B cell (primary cell): ENCODE measurements at regions of chr5 and their contacts with region 1.

Region 1: DNA sequence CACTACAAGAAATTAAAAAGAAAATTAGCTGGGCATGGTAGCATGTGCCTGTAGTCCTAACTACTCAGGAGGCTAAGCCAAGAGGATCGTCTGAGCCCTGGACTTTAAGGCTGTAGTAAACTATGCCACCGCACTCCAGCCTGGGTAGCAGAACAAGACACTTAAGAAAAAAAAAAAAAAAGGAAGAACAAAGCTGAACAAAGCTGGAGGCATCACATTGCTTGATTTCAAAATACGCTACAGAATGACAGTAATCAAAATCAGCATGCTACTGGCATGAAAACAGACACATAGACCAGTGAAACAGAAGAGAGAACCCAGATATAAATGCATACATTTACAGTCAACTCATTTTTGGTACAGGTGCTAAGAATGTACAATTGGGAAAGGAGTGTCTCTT is 14.5 kb upstream of the OTULIN start:
- DNase-seq: no peak
- ATAC-seq: no peak
- H3K4me3 ChIP-seq: no peak overlapping the region
- H3K4me3 Mint-ChIP-seq: no peak overlapping the region
- H3K27ac ChIP-seq: no peak overlapping the region
- H3K27ac Mint-ChIP-seq: no peak overlapping the region
- H3K4me1 ChIP-seq: peaks cover under 1 to 1% of the 10 kb centered on the region in 2 donors
- H3K4me1 Mint-ChIP-seq: peaks cover under 1% of the 10 kb centered on the region
- H3K27me3 ChIP-seq: no peaks in the 10 kb centered on the region
- H3K27me3 Mint-ChIP-seq: peaks cover 20% of the 10 kb centered on the region
- CTCF ChIP-seq: no peak

Region 2: DNA sequence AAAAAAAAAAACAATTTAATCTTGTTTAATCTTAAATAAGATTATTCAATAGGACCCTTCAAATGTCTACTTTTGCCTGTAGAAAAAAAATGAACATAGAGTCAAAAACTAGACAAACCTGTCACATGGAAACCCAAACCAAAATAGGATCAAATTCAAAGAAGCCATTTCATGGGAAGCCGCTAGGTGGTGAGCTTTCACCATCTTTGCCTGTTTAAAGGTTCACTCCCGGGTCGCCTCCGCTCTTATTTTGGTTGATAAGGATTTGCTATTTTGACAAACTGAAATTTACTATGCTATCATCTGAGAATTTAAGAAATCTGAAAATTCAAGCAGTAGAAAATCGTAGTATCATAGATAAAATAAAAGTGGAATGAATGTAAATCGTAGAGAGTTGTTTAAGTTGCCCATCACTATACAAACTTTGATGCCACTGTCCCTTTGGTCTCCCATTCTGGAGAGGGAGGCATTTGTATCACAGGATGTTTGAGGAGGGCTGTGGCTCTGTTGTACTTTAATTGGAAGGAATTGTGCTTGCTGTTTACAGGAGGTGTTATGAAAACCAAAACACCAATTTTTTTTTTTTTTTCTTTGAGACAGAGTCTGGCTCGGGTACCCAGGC is 662.1 kb before region 1 on chr5:
- CTCF ChIA-PET with region 1: interaction called, 40 read pairs
- POLR2A ChIA-PET with region 1: no interaction called
- intact Hi-C with region 1: loop called (anchors 1 kb)
- DNase-seq: peak; percentile 65
- ATAC-seq: no peak
- H3K4me3 ChIP-seq: no peak overlapping the region
- H3K4me3 Mint-ChIP-seq: no peak overlapping the region
- H3K27ac ChIP-seq: no peak overlapping the region
- H3K27ac Mint-ChIP-seq: no peak overlapping the region
- H3K4me1 ChIP-seq: no peaks in the 10 kb centered on the region
- H3K4me1 Mint-ChIP-seq: peaks cover 2% of the 10 kb centered on the region
- H3K27me3 ChIP-seq: no peaks in the 10 kb centered on the region
- H3K27me3 Mint-ChIP-seq: peaks cover 17% of the 10 kb centered on the region
- CTCF ChIP-seq: peak; percentile 83

Region 3: GRCh38 chr5:14399054-14399692 is 250.9 kb before region 1 on chr5:
- CTCF ChIA-PET with region 1: interaction called, 51 read pairs
- POLR2A ChIA-PET with region 1: no interaction called
- intact Hi-C with region 1: no loop called
- DNase-seq: peak; percentile 39
- ATAC-seq: no peak
- H3K4me3 ChIP-seq: no peak overlapping the region
- H3K4me3 Mint-ChIP-seq: no peak overlapping the region
- H3K27ac ChIP-seq: no peak overlapping the region
- H3K27ac Mint-ChIP-seq: no peak overlapping the region
- H3K4me1 ChIP-seq: no peaks in the 10 kb centered on the region
- H3K4me1 Mint-ChIP-seq: no peaks in the 10 kb centered on the region
- H3K27me3 ChIP-seq: no peaks in the 10 kb centered on the region
- H3K27me3 Mint-ChIP-seq: no peaks in the 10 kb centered on the region
- CTCF ChIP-seq: peak; percentile 70

Region 4: GRCh38 chr5:14685757-14686156 is 35.7 kb after region 1 on chr5:
- CTCF ChIA-PET with region 1: interaction called, 10 read pairs
- POLR2A ChIA-PET with region 1: no interaction called
- intact Hi-C with region 1: no loop called
- DNase-seq: peak; percentile 70
- ATAC-seq: peak; percentile 79
- H3K4me3 ChIP-seq: no peak overlapping the region
- H3K4me3 Mint-ChIP-seq: peak overlapping the region; percentile 8
- H3K27ac ChIP-seq: no peak overlapping the region
- H3K27ac Mint-ChIP-seq: no peak overlapping the region
- H3K4me1 ChIP-seq: peaks cover 5 to 10% of the 10 kb centered on the region in 2 donors
- H3K4me1 Mint-ChIP-seq: peaks cover 9% of the 10 kb centered on the region
- H3K27me3 ChIP-seq: no peaks in the 10 kb centered on the region
- H3K27me3 Mint-ChIP-seq: no peaks in the 10 kb centered on the region
- CTCF ChIP-seq: peak; percentile 74